Caco-2 (cell line): ENCODE measurements at regions of chr5 and their contacts with region 1.

Region 1: GRCh38 chr5:134370871-134371833 is at the start of gene UBE2B:
- DNase-seq: peak; percentile 97 to 99
- H3K4me3 ChIP-seq: peak within 1 kb of the TSS; percentile 98
- H3K4me3 Mint-ChIP-seq: peak within 1 kb of the TSS; percentile 97
- H3K27ac Mint-ChIP-seq: peak within 1 kb of the TSS; percentile 99
- H3K4me1 ChIP-seq: peaks cover 2% of the 10 kb centered on the region; the same call in 1 of the 2 replicates
- H3K4me1 Mint-ChIP-seq: peaks cover 20% of the 10 kb centered on the region
- H3K27me3 ChIP-seq: no peaks in the 10 kb centered on the region
- H3K27me3 Mint-ChIP-seq: no peaks in the 10 kb centered on the region
- CTCF ChIP-seq: no peak
- total RNA-seq, gene UBE2B: 76.1 and 78.9 TPM in 2 replicates

Region 2: DNA sequence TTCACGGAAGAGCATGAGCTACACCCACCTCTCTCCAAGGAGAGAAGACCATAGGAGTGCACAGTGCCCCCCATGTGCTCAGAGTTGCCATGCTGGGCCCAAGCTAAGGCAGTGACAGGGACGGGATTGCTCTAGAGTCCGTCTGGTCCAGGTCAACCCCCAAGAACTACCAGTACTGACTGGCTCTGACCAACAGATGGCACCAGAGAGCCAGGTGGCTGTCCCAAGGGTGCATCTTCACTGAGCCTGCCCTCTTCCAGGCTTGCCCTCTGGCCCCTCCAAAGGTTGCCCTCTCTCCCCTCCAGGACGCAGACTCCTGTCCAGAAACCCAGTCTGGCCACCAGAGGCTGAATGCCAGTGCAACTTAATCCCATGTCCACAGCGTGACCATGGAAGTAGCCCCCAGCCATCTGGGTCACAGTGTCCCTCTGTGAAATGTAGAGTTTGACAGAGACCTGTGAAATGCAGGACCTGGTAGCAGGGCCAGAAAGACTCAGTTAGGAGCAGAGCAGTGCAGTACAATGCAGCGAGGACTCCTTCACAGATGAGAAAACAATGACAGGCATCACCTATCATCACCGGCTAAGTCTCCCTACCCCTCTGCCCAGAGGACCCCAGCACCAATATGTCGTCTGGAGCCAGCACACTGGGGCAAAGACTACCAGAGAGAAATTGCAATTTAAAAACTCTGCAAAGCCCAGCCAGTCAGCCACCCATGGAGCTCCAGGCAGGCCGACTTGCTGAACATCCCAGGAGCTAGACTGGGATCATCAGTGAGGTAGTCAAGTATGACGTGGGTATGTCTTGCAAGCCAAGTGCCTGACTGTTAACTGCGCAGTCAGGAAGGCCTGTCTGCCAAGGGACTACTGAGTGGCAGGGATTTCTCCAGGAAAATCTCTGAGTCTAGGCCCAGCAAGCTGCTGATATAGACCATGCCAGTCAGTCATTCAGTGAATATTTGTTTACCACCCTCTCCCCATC is 186.7 kb before region 1 on chr5:
- CTCF ChIA-PET with region 1: no interaction called
- POLR2A ChIA-PET with region 1: interaction called, 12 read pairs
- intact Hi-C with region 1: no loop called
- DNase-seq: peak; percentile 80 to 83
- H3K4me3 ChIP-seq: no peak overlapping the region
- H3K4me3 Mint-ChIP-seq: no peak overlapping the region
- H3K27ac Mint-ChIP-seq: no peak overlapping the region
- H3K4me1 ChIP-seq: peaks cover 8% of the 10 kb centered on the region; the same call in 1 of the 2 replicates
- H3K4me1 Mint-ChIP-seq: no peaks in the 10 kb centered on the region
- H3K27me3 ChIP-seq: no peaks in the 10 kb centered on the region
- H3K27me3 Mint-ChIP-seq: no peaks in the 10 kb centered on the region
- CTCF ChIP-seq: peak; percentile 90 to 94

Region 3: GRCh38 chr5:134304311-134304710 is 66.8 kb before region 1 on chr5:
- CTCF ChIA-PET with region 1: no interaction called
- POLR2A ChIA-PET with region 1: interaction called, 3 read pairs
- intact Hi-C with region 1: loop called (anchors 5 kb)
- DNase-seq: no peak
- H3K4me3 ChIP-seq: no peak overlapping the region
- H3K4me3 Mint-ChIP-seq: no peak overlapping the region
- H3K27ac Mint-ChIP-seq: no peak overlapping the region
- H3K4me1 ChIP-seq: peaks cover 16% of the 10 kb centered on the region
- H3K4me1 Mint-ChIP-seq: peaks cover 12% of the 10 kb centered on the region
- H3K27me3 ChIP-seq: no peaks in the 10 kb centered on the region
- H3K27me3 Mint-ChIP-seq: no peaks in the 10 kb centered on the region
- CTCF ChIP-seq: no peak

Region 4: GRCh38 chr5:134406390-134406789 is 35.2 kb after region 1 on chr5:
- CTCF ChIA-PET with region 1: no interaction called
- POLR2A ChIA-PET with region 1: no interaction called
- intact Hi-C with region 1: no loop called
- DNase-seq: no peak
- H3K4me3 ChIP-seq: no peak overlapping the region
- H3K4me3 Mint-ChIP-seq: no peak overlapping the region
- H3K27ac Mint-ChIP-seq: no peak overlapping the region
- H3K4me1 ChIP-seq: peaks cover 6% of the 10 kb centered on the region
- H3K4me1 Mint-ChIP-seq: no peaks in the 10 kb centered on the region
- H3K27me3 ChIP-seq: no peaks in the 10 kb centered on the region
- H3K27me3 Mint-ChIP-seq: no peaks in the 10 kb centered on the region
- CTCF ChIP-seq: no peak

Region 5: DNA sequence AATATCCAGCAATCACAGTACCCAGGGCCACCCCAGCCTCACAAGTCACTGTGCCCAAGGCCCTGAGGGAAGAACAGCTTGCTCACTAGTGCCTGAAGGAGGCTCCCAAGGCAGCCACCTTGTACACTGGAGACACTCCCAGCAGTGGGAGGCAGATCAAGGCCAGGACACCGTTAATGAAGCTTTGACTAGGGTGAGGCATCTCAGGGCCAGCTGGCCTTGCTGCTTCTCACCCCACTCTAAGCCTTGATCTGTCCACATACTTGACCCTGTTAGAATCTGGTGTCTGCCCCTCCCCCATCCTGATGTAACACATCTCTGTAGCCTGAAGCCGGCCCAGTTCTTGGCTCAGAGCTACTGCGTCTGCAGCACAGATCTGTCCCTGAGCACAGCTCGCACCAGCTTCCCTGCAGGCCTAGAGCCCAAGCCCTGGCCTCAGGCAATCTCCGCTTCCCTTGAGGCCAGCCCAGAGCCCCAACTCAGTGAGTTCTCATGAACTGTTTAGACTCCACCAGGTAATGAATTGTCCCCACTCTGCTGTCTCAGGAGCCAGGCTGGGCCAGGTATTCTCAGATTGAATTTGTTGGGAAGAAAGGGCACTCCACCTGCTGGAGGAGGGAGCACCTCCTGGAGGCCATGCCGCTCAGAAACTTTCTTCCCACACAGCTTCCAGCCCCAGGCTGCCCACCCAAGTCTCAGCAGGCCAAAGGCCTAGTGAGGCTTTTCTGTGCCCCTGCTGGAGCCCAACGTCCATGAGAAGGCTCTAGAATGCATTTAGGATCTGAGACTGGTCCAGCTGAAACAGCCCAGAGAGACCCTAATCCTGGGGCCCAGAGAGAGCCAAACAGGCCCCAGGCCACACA is 140.9 kb after region 1 on chr5:
- CTCF ChIA-PET with region 1: interaction called, 5 read pairs
- POLR2A ChIA-PET with region 1: no interaction called
- intact Hi-C with region 1: loop called (anchors 5 kb)
- DNase-seq: peak; percentile 90 to 93
- H3K4me3 ChIP-seq: no peak overlapping the region
- H3K4me3 Mint-ChIP-seq: peak overlapping the region; percentile 40
- H3K27ac Mint-ChIP-seq: peak overlapping the region; percentile 92
- H3K4me1 ChIP-seq: peaks cover 48% of the 10 kb centered on the region
- H3K4me1 Mint-ChIP-seq: peaks cover 50% of the 10 kb centered on the region
- H3K27me3 ChIP-seq: no peaks in the 10 kb centered on the region
- H3K27me3 Mint-ChIP-seq: no peaks in the 10 kb centered on the region
- CTCF ChIP-seq: peak; percentile 53 to 70

Region 6: DNA sequence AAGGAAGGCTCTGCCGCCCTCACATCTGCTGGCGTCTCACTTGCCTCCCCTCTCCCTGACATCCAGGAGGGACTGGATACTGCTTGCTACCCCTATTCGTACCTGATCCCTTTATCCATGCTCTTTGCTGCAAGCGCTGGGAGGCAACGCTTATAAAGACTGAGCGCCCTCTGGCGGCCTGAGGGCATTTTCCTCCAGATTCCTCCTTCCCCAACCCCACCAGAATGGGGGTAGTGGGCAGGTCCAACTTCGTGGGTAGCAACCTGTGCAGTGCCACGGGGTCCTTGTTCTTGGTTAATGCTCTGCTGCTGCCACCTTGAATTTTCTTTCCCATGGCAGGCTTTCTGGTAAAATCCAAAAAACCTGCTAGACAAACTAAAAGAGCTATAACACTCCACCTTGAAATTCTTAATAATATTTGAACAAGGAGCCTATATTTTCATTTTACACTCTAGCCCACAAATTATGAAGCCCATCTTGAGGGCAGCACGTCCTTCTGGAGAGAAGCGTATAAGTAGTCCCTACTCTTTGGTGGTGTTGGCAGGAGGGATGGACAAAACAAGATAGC is 206.7 kb after region 1 on chr5:
- CTCF ChIA-PET with region 1: interaction called, 4 read pairs
- POLR2A ChIA-PET with region 1: no interaction called
- intact Hi-C with region 1: loop called (anchors 2 kb)
- DNase-seq: peak; percentile 74 to 79
- H3K4me3 ChIP-seq: no peak overlapping the region
- H3K4me3 Mint-ChIP-seq: no peak overlapping the region
- H3K27ac Mint-ChIP-seq: no peak overlapping the region
- H3K4me1 ChIP-seq: no peaks in the 10 kb centered on the region
- H3K4me1 Mint-ChIP-seq: no peaks in the 10 kb centered on the region
- H3K27me3 ChIP-seq: no peaks in the 10 kb centered on the region
- H3K27me3 Mint-ChIP-seq: no peaks in the 10 kb centered on the region
- CTCF ChIP-seq: peak; percentile 77 to 81

Region 7: GRCh38 chr5:134648425-134649162 is 277.4 kb after region 1 on chr5 and contains the start of gene SEC24A:
- CTCF ChIA-PET with region 1: no interaction called
- POLR2A ChIA-PET with region 1: no interaction called
- intact Hi-C with region 1: no loop called
- DNase-seq: peak; percentile 94 to 95
- H3K4me3 ChIP-seq: peak within 1 kb of the TSS; percentile 85
- H3K4me3 Mint-ChIP-seq: peak within 1 kb of the TSS; percentile 82
- H3K27ac Mint-ChIP-seq: peak within 1 kb of the TSS; percentile 90
- H3K4me1 ChIP-seq: no peaks in the 10 kb centered on the region; the same call in 1 of the 2 replicates
- H3K4me1 Mint-ChIP-seq: no peaks in the 10 kb centered on the region
- H3K27me3 ChIP-seq: no peaks in the 10 kb centered on the region
- H3K27me3 Mint-ChIP-seq: no peaks in the 10 kb centered on the region
- CTCF ChIP-seq: no peak
- total RNA-seq, gene SEC24A: 47.4 and 49.9 TPM in 2 replicates